Activated B cell treated with CpG ODN at 0.5 μM for 24 hours (primary cell): ENCODE measurements at regions of chr3 and their contacts with region 1.

Region 1: DNA sequence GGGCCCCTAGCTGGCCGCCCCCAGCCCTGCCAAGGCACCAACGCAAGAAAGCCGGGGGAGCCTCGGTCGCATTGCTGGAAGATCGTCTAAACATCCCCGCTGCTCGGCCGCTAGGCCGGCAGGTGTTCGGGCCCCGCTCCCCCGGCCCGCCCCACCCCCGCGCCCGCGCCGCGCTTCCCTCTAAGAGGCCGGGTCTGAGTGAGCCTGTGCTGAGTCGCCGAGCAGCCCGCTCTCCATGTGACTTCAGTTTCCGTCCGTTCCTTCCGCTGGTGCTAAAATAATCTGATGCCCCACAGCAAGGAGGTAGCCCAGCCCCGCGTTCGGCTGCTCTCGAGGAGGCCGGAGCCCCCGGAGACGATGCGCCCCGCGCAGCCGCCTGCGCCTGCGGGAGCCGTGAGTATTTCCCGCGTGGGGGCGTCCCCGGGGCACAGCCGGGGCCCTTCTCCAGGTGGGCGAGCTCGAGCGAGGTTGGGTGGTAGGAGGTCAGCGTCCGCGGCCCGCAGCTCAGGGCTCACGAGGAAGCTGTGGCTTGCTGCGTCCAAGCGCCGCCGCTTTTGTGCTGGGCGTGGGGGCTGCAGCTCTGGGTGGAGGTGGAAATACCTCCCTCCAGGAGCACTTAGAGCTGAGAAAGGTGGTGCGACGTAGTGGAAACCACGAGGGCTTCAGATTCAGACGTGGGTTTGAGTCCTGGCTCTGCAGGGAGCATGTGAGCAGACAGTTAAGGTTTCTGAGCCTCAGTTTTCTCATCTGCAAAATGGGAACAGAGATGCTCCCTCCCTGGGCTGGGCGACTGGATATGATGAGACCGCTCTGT is at the start of gene NRROS:
- DNase-seq: peak; percentile 67
- ATAC-seq: peak; percentile 51
- H3K4me3 Mint-ChIP-seq: peak within 1 kb of the TSS; percentile 90
- H3K27ac Mint-ChIP-seq: peak within 1 kb of the TSS; percentile 99
- H3K4me1 Mint-ChIP-seq: peaks cover 78% of the 10 kb centered on the region
- H3K27me3 Mint-ChIP-seq: no peaks in the 10 kb centered on the region
- CTCF ChIP-seq: no peak
- total RNA-seq, gene NRROS: 88.5 and 92.4 TPM in 2 replicates

Region 2: GRCh38 chr3:196323701-196324100 is 316.0 kb before region 1 on chr3:
- CTCF ChIA-PET with region 1: no interaction called
- POLR2A ChIA-PET with region 1: no interaction called
- intact Hi-C with region 1: no loop called
- DNase-seq: no peak
- ATAC-seq: no peak
- H3K4me3 Mint-ChIP-seq: no peak overlapping the region
- H3K27ac Mint-ChIP-seq: no peak overlapping the region
- H3K4me1 Mint-ChIP-seq: peaks cover 2% of the 10 kb centered on the region
- H3K27me3 Mint-ChIP-seq: no peaks in the 10 kb centered on the region
- CTCF ChIP-seq: no peak

Region 3: DNA sequence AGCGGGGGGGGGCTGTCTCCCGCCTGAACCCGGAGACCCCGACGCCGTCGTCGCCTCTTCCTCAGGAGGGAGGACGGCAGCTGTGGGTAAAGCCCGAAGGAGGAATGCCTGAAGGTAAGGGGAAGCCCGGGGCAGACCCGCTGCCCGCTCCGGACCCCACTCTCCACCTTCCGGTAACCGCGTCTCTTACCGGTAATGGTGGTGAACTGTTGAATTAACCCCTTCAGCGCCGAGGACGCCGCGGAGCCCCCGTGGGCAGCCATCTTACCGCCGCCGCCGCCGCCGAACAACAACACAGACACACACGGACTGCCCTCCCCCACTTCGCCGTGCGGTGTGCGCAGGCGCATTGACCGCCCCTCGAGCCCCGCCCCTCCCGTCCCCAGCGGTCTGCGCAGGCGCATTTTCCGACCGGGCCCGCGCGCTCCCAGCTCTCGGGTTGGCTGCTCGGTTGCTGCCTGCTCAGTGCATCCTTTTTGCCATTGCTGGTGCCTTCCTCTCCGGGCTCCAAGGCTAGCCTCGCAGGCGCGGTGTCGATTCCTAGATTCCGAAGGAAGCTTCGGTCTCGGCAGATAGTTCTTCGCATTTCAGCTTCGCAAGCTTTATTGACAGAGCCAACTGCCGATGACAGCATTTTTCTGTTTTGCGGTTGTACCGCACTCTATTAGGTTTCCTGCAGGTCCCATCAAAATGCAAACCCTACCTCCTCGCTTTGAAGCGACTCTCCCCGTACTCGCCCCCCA is 207.4 kb before region 1 on chr3 and contains the start of gene UBXN7:
- CTCF ChIA-PET with region 1: no interaction called
- POLR2A ChIA-PET with region 1: no interaction called
- intact Hi-C with region 1: no loop called
- DNase-seq: peak; percentile 92
- ATAC-seq: peak; percentile 81
- H3K4me3 Mint-ChIP-seq: peak within 1 kb of the TSS; percentile 96
- H3K27ac Mint-ChIP-seq: peak within 1 kb of the TSS; percentile 80
- H3K4me1 Mint-ChIP-seq: peaks cover 22% of the 10 kb centered on the region
- H3K27me3 Mint-ChIP-seq: no peaks in the 10 kb centered on the region
- CTCF ChIP-seq: no peak
- total RNA-seq, gene UBXN7: 60.8 and 66.5 TPM in 2 replicates

Region 4: DNA sequence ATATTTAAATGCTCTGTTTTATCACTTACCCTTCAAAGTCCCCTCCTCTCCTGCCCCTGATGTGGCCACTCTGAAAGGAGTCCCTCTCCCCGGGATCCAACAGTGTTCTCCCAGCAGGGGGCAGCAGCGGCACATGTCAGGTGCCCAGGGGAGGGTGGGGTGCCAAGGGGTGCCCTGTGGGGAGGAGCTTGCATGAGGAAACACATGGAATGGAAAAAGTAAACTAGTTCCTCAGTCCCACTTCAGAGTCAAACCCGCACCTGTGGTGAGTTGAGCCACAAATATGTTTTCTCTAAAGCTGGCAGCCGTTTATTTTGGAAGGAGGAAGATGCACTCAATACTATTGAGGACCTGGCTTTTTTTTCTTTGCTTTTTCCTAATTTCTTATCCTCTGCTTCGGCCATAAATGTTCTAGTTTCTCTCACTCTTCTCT is 30.3 kb before region 1 on chr3:
- CTCF ChIA-PET with region 1: interaction called, 22 read pairs
- POLR2A ChIA-PET with region 1: interaction called, 52 read pairs
- intact Hi-C with region 1: loop called (anchors 1 kb)
- DNase-seq: peak; percentile 89
- ATAC-seq: peak; percentile 96
- H3K4me3 Mint-ChIP-seq: peak overlapping the region; percentile 52
- H3K27ac Mint-ChIP-seq: peak overlapping the region; percentile 69
- H3K4me1 Mint-ChIP-seq: peaks cover 20% of the 10 kb centered on the region
- H3K27me3 Mint-ChIP-seq: no peaks in the 10 kb centered on the region
- CTCF ChIP-seq: peak; percentile 52

Region 5: GRCh38 chr3:196662711-196663571 is 23.3 kb after region 1 on chr3:
- CTCF ChIA-PET with region 1: no interaction called
- POLR2A ChIA-PET with region 1: interaction called, 17 read pairs
- intact Hi-C with region 1: no loop called
- DNase-seq: no peak
- ATAC-seq: no peak
- H3K4me3 Mint-ChIP-seq: no peak overlapping the region
- H3K27ac Mint-ChIP-seq: no peak overlapping the region
- H3K4me1 Mint-ChIP-seq: peaks cover 13% of the 10 kb centered on the region
- H3K27me3 Mint-ChIP-seq: no peaks in the 10 kb centered on the region
- CTCF ChIP-seq: no peak

Region 6: GRCh38 chr3:196711838-196712513 is 72.3 kb after region 1 on chr3 and contains the starts of genes CEP19 and PIGX:
- CTCF ChIA-PET with region 1: no interaction called
- POLR2A ChIA-PET with region 1: interaction called, 7 read pairs
- intact Hi-C with region 1: loop called (anchors 1 kb)
- DNase-seq: peak; percentile 96
- ATAC-seq: peak; percentile 80
- H3K4me3 Mint-ChIP-seq: peak within 1 kb of the TSS; percentile 91
- H3K27ac Mint-ChIP-seq: peak within 1 kb of the TSS; percentile 98
- H3K4me1 Mint-ChIP-seq: peaks cover 20% of the 10 kb centered on the region
- H3K27me3 Mint-ChIP-seq: no peaks in the 10 kb centered on the region
- CTCF ChIP-seq: no peak
- total RNA-seq, gene CEP19: 4.0 and 4.1 TPM in 2 replicates
- total RNA-seq, gene PIGX: 18.0 and 21.8 TPM in 2 replicates

Region 7: DNA sequence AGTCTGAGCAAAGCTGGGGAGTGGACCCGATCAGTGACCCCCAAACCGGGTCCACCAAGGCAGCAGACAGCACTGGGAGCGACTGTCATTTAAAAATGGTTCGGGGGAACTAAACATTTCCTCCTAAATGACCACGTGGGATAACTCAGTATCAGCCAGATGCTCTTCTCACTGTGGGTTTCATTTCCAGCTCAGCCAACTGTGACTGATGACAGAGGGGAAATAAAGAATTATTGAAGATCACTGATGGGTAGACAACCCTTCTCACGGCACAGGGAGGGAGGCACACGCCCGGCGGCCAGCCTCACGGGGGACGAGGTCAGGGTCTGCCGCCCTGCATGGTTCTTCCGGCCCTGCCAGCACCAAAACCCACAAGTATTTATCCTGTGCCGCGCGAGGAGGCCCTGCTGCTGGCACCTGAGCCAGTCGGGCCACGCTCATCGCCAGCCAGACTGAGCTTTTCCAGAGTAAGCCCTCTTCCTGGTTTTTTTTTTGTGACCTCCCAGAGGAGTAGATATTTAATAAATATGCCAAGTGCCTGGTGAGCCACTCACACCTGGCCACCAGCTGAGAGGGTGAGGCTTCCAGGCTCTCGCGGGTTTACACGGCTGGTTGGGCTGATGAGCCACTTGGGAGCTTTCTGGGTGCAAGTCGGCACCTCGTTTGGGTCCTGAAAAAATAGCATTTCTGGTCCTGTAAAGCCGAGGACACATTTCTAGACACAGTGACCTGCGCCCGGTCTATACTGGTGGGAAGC is 383.7 kb after region 1 on chr3:
- CTCF ChIA-PET with region 1: no interaction called
- POLR2A ChIA-PET with region 1: interaction called, 9 read pairs
- intact Hi-C with region 1: loop called (anchors 2 kb)
- DNase-seq: peak; percentile 70
- ATAC-seq: peak; percentile 79
- H3K4me3 Mint-ChIP-seq: peak overlapping the region; percentile 75
- H3K27ac Mint-ChIP-seq: peak overlapping the region; percentile 96
- H3K4me1 Mint-ChIP-seq: peaks cover 41% of the 10 kb centered on the region
- H3K27me3 Mint-ChIP-seq: peaks cover 9% of the 10 kb centered on the region
- CTCF ChIP-seq: no peak